K562 (cell line): ENCODE measurements at regions of chr6 and their contacts with region 1.

Region 1: DNA sequence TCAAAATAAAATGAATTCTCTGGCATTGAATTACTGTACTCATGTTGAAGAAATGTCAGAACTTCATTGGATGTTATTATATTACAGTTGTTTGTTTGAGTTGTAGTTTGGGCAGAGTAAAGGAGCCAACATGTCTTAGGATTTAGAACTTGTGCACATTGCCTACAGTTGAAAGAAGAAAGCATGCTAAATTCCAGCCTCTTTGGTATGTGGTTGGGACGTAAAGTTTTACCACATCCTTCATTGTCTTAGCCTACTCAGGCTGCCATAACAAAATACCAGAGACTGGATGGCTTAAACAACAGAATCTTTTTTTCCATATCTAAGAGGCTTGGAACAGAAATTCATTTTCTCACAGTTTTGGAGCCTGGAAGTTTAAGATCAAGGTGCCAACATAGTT is 42.4 kb downstream of the HFE start:
- DNase-seq: no peak
- ATAC-seq: no peak
- H3K4me3 ChIP-seq: no peak overlapping the region
- H3K27ac ChIP-seq: no peak overlapping the region
- H3K4me1 ChIP-seq: peaks cover 3 to 32% of the 10 kb centered on the region in 2 experiments; a peak in 3 of 5 replicates
- H3K27me3 ChIP-seq: no peaks in the 10 kb centered on the region
- CTCF ChIP-seq: no peak
- EP300 ChIP-seq: no peak
- POLR2A ChIP-seq: no peak
- RAD21 ChIP-seq: no peak

Region 2: DNA sequence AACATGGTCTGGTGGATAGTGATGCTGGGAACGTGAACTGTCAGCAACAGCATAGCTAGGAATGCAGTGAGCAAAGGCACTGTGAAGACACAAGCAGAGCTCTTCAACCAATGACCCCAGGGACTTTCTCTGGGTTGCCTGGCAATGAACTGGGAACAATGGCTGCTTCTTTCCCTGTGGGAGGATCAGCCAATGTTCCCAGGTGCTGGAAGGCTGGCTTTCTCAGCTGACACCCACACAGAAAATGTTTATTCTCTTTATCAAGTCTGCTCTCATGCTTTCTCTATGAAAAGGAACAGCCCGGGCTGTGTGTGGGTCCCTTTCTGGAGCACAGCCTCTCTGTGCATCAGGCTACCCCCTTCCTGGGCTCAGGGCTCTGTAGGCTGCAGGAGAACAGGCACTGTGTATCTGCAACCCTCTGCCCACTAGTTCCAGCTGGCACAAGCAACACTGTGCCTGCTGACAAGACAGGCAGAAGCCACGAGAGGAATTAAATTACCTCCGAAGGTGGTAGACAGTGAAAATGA is 11.8 kb after region 1 on chr6:
- CTCF ChIA-PET with region 1: no interaction called
- POLR2A ChIA-PET with region 1: interaction called, 190 read pairs
- in situ Hi-C with region 1: no loop called
- intact Hi-C with region 1: no loop called
- DNase-seq: no peak
- ATAC-seq: peak; percentile 57
- H3K4me3 ChIP-seq: no peak overlapping the region
- H3K27ac ChIP-seq: no peak overlapping the region; the same call in 2 of the 3 replicates
- H3K4me1 ChIP-seq: no peaks in the 10 kb centered on the region
- H3K27me3 ChIP-seq: no peaks in the 10 kb centered on the region
- CTCF ChIP-seq: no peak
- EP300 ChIP-seq: no peak
- POLR2A ChIP-seq: no peak
- RAD21 ChIP-seq: no peak

Region 3: GRCh38 chr6:26149240-26149639 is 19.6 kb after region 1 on chr6:
- CTCF ChIA-PET with region 1: no interaction called
- POLR2A ChIA-PET with region 1: interaction called, 465 read pairs
- in situ Hi-C with region 1: no loop called
- intact Hi-C with region 1: no loop called
- DNase-seq: no peak
- ATAC-seq: no peak
- H3K4me3 ChIP-seq: no peak overlapping the region
- H3K27ac ChIP-seq: no peak overlapping the region
- H3K4me1 ChIP-seq: peaks cover 0 to 4% of the 10 kb centered on the region in 2 experiments; a peak in 2 of 5 replicates
- H3K27me3 ChIP-seq: no peaks in the 10 kb centered on the region
- CTCF ChIP-seq: no peak
- EP300 ChIP-seq: no peak
- POLR2A ChIP-seq: no peak
- RAD21 ChIP-seq: no peak